ENCODE measurements at regions of chr16 and their contacts with region 1.

Region 1: GRCh38 chr16:106623-107324 is 28.7 kb downstream of the MPG start:
- DNase-seq: peak; percentile 74
- H3K4me3 ChIP-seq: no peak overlapping the region
- H3K27ac ChIP-seq: no peak overlapping the region
- H3K27me3 ChIP-seq: no peaks in the 10 kb centered on the region
- CTCF ChIP-seq: peak; percentile 86

Region 2: GRCh38 chr16:65671-66137 is 41.1 kb before region 1 on chr16:
- CTCF ChIA-PET with region 1: interaction called, 35 read pairs
- POLR2A ChIA-PET with region 1: no interaction called
- DNase-seq: no peak
- H3K4me3 ChIP-seq: no peak overlapping the region
- H3K27ac ChIP-seq: no peak overlapping the region
- H3K27me3 ChIP-seq: no peaks in the 10 kb centered on the region
- CTCF ChIP-seq: peak; percentile 95

Region 3: DNA sequence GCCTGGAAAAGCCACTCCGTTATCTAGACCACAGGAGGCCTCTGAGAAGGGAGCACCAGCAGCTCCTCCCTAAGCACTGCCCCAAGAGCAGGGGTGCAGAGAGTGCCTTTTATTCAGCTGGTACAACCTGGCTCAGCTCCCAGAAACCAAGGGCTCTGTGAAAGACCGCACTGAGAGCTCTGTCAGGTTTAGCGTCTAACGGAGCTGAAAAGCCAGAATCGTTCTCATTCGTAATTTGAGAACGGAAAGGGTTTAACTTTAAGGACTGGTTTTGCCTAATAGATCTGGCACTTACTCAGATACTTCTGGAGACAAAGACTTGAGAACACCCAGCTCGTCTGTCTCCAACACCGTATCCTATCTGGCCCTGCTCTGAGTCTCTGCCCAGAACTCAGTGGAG is 15.3 kb before region 1 on chr16:
- CTCF ChIA-PET with region 1: interaction called, 63 read pairs
- POLR2A ChIA-PET with region 1: no interaction called
- DNase-seq: no peak
- H3K4me3 ChIP-seq: no peak overlapping the region
- H3K27ac ChIP-seq: no peak overlapping the region
- H3K27me3 ChIP-seq: no peaks in the 10 kb centered on the region
- CTCF ChIP-seq: no peak

Region 4: GRCh38 chr16:117379-118365 is 10.9 kb after region 1 on chr16:
- CTCF ChIA-PET with region 1: interaction called, 32 read pairs
- POLR2A ChIA-PET with region 1: no interaction called
- DNase-seq: no peak
- H3K4me3 ChIP-seq: no peak overlapping the region
- H3K27ac ChIP-seq: no peak overlapping the region
- H3K27me3 ChIP-seq: no peaks in the 10 kb centered on the region
- CTCF ChIP-seq: peak; percentile 73

Region 5: GRCh38 chr16:129075-129474 is 22.3 kb after region 1 on chr16:
- CTCF ChIA-PET with region 1: interaction called, 16 read pairs
- POLR2A ChIA-PET with region 1: no interaction called
- DNase-seq: no peak
- H3K4me3 ChIP-seq: no peak overlapping the region
- H3K27ac ChIP-seq: no peak overlapping the region
- H3K27me3 ChIP-seq: no peaks in the 10 kb centered on the region
- CTCF ChIP-seq: no peak

Region 6: DNA sequence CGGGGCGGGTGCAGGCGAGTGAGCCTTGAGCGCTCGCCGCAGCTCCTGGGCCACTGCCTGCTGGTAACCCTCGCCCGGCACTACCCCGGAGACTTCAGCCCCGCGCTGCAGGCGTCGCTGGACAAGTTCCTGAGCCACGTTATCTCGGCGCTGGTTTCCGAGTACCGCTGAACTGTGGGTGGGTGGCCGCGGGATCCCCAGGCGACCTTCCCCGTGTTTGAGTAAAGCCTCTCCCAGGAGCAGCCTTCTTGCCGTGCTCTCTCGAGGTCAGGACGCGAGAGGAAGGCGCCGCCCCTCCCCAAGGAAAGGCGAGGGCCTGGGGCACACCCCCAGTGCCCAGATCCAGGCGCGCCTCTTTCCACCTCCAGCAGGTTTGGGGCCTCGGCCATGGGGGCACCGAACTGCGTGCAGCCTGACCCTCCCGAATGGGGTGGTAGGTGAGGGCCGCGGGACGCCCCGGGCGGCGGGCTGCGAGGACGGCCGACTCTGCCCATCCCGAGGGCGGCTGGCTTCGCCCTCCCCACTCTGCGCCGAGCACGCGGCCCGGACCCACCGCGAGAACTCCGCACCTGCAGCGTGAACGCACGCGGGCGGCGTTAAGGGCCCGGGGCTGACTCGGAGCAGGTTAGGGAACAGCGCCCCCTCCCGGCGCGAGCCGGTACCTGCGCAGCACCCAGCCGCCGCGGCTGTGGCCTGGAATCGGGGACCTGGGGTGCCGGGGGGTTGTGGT is 74.3 kb after region 1 on chr16:
- CTCF ChIA-PET with region 1: interaction called, 89 read pairs
- POLR2A ChIA-PET with region 1: interaction called, 5 read pairs
- DNase-seq: no peak
- H3K4me3 ChIP-seq: peak overlapping the region; percentile 50
- H3K27ac ChIP-seq: no peak overlapping the region
- H3K27me3 ChIP-seq: peaks cover 25% of the 10 kb centered on the region
- CTCF ChIP-seq: peak; percentile 89

Region 7: GRCh38 chr16:361872-362701 is 255.3 kb after region 1 on chr16:
- CTCF ChIA-PET with region 1: interaction called, 30 read pairs
- POLR2A ChIA-PET with region 1: no interaction called
- DNase-seq: peak; percentile 46
- H3K4me3 ChIP-seq: no peak overlapping the region
- H3K27ac ChIP-seq: no peak overlapping the region
- H3K27me3 ChIP-seq: no peaks in the 10 kb centered on the region
- CTCF ChIP-seq: peak; percentile 85

Region 8: GRCh38 chr16:471353-472198 is 364.8 kb after region 1 on chr16:
- CTCF ChIA-PET with region 1: no interaction called
- POLR2A ChIA-PET with region 1: no interaction called
- DNase-seq: no peak
- H3K4me3 ChIP-seq: no peak overlapping the region
- H3K27ac ChIP-seq: peak overlapping the region; percentile 21
- H3K27me3 ChIP-seq: no peaks in the 10 kb centered on the region
- CTCF ChIP-seq: no peak